Activated B cell treated with CpG ODN at 0.5 μM for 24 hours (primary cell): ENCODE measurements at regions of chr10 and their contacts with region 1.

Region 1: DNA sequence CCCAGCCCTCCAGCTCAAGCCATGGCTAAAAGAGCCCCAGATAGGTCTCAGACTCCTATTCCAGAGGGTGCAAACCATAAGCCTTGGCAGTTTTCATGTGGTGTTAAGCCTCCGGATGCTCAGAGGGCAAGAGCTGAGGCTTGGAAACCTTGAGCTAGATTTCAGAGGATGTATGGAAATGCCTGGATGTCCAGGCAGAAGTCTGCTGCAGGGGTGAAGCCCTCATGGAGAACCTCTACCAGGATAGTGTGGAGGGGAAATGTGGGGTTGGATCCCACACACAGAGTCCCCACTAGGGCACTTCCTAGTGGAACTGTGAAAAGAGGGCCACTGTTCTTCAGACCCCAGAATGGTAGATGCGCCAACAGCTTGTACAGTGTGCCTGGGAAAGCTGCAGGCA is 13.2 kb upstream of the HPSE2 start:
- DNase-seq: no peak
- ATAC-seq: no peak
- H3K4me3 Mint-ChIP-seq: no peak overlapping the region
- H3K27ac Mint-ChIP-seq: no peak overlapping the region
- H3K4me1 Mint-ChIP-seq: no peaks in the 10 kb centered on the region
- H3K27me3 Mint-ChIP-seq: peaks cover 17% of the 10 kb centered on the region
- CTCF ChIP-seq: no peak

Region 2: GRCh38 chr10:98664331-98665042 is 584.3 kb before region 1 on chr10:
- CTCF ChIA-PET with region 1: no interaction called
- POLR2A ChIA-PET with region 1: no interaction called
- intact Hi-C with region 1: loop called (anchors 1 kb)
- DNase-seq: no peak
- ATAC-seq: peak; percentile 49
- H3K4me3 Mint-ChIP-seq: no peak overlapping the region
- H3K27ac Mint-ChIP-seq: no peak overlapping the region
- H3K4me1 Mint-ChIP-seq: no peaks in the 10 kb centered on the region
- H3K27me3 Mint-ChIP-seq: peaks cover 22% of the 10 kb centered on the region
- CTCF ChIP-seq: no peak

Region 3: DNA sequence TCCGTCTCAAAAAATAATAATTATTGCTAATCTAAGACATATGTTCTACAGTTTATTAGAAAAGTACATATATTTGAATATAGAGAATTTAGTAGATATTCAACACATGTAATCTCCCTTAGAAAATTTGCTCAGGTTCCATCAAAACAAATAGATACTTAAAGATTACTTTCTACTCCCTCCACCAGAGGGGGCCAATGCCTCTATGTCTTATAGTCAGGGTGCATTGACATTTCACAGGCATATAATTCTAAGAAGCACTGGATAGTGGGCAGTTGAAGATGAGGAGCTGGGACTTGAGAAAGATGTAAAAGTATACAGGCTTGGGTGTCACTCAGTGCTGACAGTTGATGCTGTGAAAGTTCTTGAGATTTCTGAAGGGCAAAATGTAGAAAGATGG is 500.5 kb before region 1 on chr10:
- CTCF ChIA-PET with region 1: interaction called, 7 read pairs
- POLR2A ChIA-PET with region 1: no interaction called
- intact Hi-C with region 1: loop called (anchors 1 kb)
- DNase-seq: no peak
- ATAC-seq: no peak
- H3K4me3 Mint-ChIP-seq: no peak overlapping the region
- H3K27ac Mint-ChIP-seq: no peak overlapping the region
- H3K4me1 Mint-ChIP-seq: no peaks in the 10 kb centered on the region
- H3K27me3 Mint-ChIP-seq: peaks cover 4% of the 10 kb centered on the region
- CTCF ChIP-seq: no peak

Region 4: GRCh38 chr10:98790802-98791201 is 458.0 kb before region 1 on chr10:
- CTCF ChIA-PET with region 1: interaction called, 6 read pairs
- POLR2A ChIA-PET with region 1: no interaction called
- intact Hi-C with region 1: loop called (anchors 5 kb)
- DNase-seq: no peak
- ATAC-seq: no peak
- H3K4me3 Mint-ChIP-seq: no peak overlapping the region
- H3K27ac Mint-ChIP-seq: no peak overlapping the region
- H3K4me1 Mint-ChIP-seq: no peaks in the 10 kb centered on the region
- H3K27me3 Mint-ChIP-seq: peaks cover 9% of the 10 kb centered on the region
- CTCF ChIP-seq: no peak

Region 5: GRCh38 chr10:98858525-98858924 is 390.3 kb before region 1 on chr10:
- CTCF ChIA-PET with region 1: no interaction called
- POLR2A ChIA-PET with region 1: no interaction called
- intact Hi-C with region 1: loop called (anchors 5 kb)
- DNase-seq: no peak
- ATAC-seq: no peak
- H3K4me3 Mint-ChIP-seq: no peak overlapping the region
- H3K27ac Mint-ChIP-seq: no peak overlapping the region
- H3K4me1 Mint-ChIP-seq: no peaks in the 10 kb centered on the region
- H3K27me3 Mint-ChIP-seq: peaks cover 9% of the 10 kb centered on the region
- CTCF ChIP-seq: no peak

Region 6: DNA sequence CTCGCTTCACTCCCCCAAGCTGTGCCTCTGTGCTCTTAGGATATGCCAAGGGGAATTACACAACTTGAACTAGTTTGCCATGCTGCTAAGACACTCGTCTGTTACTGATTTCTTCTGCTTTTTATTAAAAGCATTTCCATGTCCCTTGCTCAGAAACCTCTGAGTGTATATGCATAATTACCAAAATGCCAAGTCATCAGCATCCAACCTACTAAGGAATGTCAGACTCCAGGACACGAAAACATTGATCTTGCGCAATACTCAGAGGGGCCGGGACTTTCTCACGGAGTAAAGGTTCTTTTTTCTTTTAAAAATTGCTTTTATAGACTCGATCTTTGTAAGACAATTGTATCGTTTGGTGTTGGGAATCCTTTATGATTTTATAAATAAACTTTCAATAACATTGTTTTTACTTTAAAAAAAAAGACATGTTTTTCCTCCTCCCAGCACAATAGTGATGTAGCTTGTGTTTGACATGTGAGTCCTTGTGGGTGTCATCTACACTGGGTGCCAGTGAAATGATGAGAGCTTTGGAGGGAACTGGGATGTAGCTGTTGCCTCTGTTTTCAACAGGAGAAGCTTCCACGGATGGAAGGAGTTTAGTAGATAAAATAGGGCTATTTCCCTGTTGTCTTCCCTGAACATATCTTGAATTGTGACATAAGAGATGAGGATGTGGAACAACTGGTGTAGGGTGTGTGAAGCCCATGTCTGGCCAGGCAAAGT is 123.9 kb after region 1 on chr10:
- CTCF ChIA-PET with region 1: no interaction called
- POLR2A ChIA-PET with region 1: no interaction called
- intact Hi-C with region 1: no loop called
- DNase-seq: no peak
- ATAC-seq: no peak
- H3K4me3 Mint-ChIP-seq: no peak overlapping the region
- H3K27ac Mint-ChIP-seq: no peak overlapping the region
- H3K4me1 Mint-ChIP-seq: peaks cover 5% of the 10 kb centered on the region
- H3K27me3 Mint-ChIP-seq: peaks cover 7% of the 10 kb centered on the region
- CTCF ChIP-seq: no peak